Mammary epithelial cell (primary cell): ENCODE measurements at regions of chr2 and their contacts with region 1.

Region 1: GRCh38 chr2:96891491-96892333 is 21.8 kb upstream of the SEMA4C start:
- DNase-seq: no peak
- H3K4me3 ChIP-seq: no peak overlapping the region
- H3K27ac ChIP-seq: no peak overlapping the region
- H3K4me1 ChIP-seq: peaks cover 21% of the 10 kb centered on the region
- H3K27me3 ChIP-seq: no peaks in the 10 kb centered on the region
- CTCF ChIP-seq: no peak

Region 2: GRCh38 chr2:96148410-96149217 is 743.1 kb before region 1 on chr2:
- CTCF ChIA-PET with region 1: no interaction called
- dilution Hi-C with region 1: no loop called
- in situ Hi-C with region 1: no loop called
- intact Hi-C with region 1: no loop called
- DNase-seq: peak; percentile 79
- H3K4me3 ChIP-seq: no peak overlapping the region
- H3K27ac ChIP-seq: no peak overlapping the region
- H3K4me1 ChIP-seq: peaks cover 40% of the 10 kb centered on the region
- H3K27me3 ChIP-seq: no peaks in the 10 kb centered on the region
- CTCF ChIP-seq: no peak

Region 3: GRCh38 chr2:96881349-96882195 is 10.1 kb before region 1 on chr2:
- CTCF ChIA-PET with region 1: interaction called, 3 read pairs
- dilution Hi-C with region 1: no loop called
- in situ Hi-C with region 1: no loop called
- intact Hi-C with region 1: loop called (anchors 1 kb)
- DNase-seq: no peak
- H3K4me3 ChIP-seq: no peak overlapping the region
- H3K27ac ChIP-seq: no peak overlapping the region
- H3K4me1 ChIP-seq: peaks cover 21% of the 10 kb centered on the region
- H3K27me3 ChIP-seq: no peaks in the 10 kb centered on the region
- CTCF ChIP-seq: no peak